Thyroid gland (tissue), 4 donors: ENCODE measurements at regions of chr6 and their contacts with region 1.

Region 1: DNA sequence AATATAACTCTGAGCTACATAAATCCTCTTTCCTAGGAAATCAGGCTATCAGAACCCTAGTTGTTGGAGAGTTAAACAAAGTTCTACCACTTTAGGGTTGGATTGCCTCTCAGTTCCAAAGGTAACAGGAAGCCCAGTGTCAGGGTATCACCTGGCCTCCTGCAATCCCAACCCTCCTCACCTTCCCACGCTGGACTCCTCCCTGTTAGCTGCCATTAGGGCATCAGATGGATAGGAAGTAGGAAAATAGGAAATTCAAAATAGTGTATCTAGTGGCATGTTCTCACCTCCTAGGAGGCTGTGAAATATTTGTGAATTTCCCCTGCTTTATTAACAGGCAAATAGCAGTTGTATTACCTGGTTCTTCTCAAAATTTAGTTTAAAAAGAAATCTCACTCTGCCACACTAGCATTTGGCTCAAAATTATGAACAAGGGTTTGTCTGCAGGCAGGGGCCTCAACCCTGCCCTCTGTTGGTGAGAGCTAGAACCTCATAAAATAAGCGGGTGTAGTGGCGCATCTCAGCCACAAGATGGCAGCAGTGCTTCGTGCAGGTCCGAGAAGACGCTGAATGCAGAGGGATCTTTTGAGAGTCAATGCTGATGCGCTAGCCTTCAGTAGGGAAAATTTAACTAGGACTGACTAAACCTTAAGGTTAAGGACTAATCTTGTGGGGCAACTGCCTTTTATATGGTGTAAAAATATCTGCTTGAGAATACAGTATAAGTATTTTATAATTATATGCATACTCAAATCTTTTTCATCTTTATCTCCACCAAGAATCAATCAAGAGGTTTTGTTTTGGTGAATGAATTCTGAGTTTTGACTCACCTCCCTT is 209.8 kb upstream of the KCNQ5 start:
- DNase-seq: peak; percentile 57 to 67
- H3K4me3 ChIP-seq: no peak overlapping the region
- H3K27ac ChIP-seq: no peak overlapping the region
- H3K4me1 ChIP-seq: no peaks in the 10 kb centered on the region
- H3K27me3 ChIP-seq: no peaks in the 10 kb centered on the region
- CTCF ChIP-seq: peak; percentile 100
- POLR2A ChIP-seq: no peak

Region 2: GRCh38 chr6:72504406-72504805 is 92.3 kb after region 1 on chr6:
- intact Hi-C with region 1: no loop called
- DNase-seq: no peak
- H3K4me3 ChIP-seq: no peak overlapping the region
- H3K27ac ChIP-seq: no peak overlapping the region
- H3K4me1 ChIP-seq: no peaks in the 10 kb centered on the region
- H3K27me3 ChIP-seq: no peaks in the 10 kb centered on the region
- CTCF ChIP-seq: no peak
- POLR2A ChIP-seq: no peak

Region 3: GRCh38 chr6:73177221-73177944 is 765.3 kb after region 1 on chr6:
- intact Hi-C with region 1: loop called (anchors 10 kb)
- DNase-seq: no peak
- H3K4me3 ChIP-seq: no peak overlapping the region
- H3K27ac ChIP-seq: no peak overlapping the region
- H3K4me1 ChIP-seq: peaks cover 5 to 7% of the 10 kb centered on the region in 2 donors
- H3K27me3 ChIP-seq: no peaks in the 10 kb centered on the region
- CTCF ChIP-seq: no peak
- POLR2A ChIP-seq: no peak